Activated CD4-positive, alpha-beta T cell treated with anti-CD3 and anti-CD28 coated beads for 36 hours (primary cell): ENCODE measurements at regions of chr4 and their contacts with region 1.

Region 1: DNA sequence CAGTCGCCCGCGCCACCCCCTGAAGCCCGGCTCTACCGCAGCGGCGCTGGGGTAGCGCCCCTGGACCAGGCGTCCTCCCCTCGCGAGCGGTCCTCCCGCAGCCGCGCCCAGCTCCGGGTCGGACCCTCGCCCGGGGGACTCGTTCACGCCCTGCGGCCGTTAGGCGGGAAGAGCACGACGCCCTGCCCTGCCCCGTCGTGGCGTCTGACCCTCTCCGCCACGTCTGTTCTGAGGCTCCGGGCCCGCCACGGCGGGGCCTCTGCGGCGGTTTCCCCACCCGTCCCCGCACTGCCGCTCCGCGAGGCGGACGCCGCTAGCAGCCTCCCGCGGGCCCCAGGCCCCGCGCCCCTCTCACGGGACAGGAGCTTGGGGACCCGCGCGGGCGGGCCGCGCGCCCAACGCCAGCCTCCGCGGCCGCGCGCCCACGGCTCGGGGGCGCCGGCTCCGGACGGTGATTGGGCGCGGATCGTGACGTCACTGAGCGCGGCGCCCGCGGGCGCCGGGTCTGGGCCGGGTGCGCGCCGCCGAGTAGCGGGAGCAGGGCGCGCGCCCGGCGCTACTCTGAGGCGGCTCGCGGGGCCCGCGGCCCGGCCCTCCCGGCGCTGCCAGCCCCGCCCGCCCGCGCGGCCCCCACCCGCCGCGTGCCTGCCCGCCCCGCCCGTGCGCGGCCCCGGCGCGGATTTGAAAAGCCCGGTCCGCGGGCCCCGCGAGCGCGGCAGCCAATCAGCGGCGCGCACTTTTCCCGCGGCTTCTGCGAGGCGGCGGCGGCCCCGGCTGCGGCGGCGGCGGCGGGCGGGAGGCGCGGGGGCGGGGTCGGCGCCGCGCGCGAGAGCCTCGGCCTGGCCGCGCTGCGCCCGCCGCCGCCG is at the start of gene NSD2:
- DNase-seq: peak; percentile 96
- ATAC-seq: peak; percentile 60
- H3K4me3 Mint-ChIP-seq: peak within 1 kb of the TSS; percentile 99
- H3K27ac Mint-ChIP-seq: peak within 1 kb of the TSS; percentile 99
- H3K4me1 Mint-ChIP-seq: peaks cover 36% of the 10 kb centered on the region
- H3K27me3 Mint-ChIP-seq: no peaks in the 10 kb centered on the region
- total RNA-seq, gene NSD2: 194 to 232 TPM

Region 2: DNA sequence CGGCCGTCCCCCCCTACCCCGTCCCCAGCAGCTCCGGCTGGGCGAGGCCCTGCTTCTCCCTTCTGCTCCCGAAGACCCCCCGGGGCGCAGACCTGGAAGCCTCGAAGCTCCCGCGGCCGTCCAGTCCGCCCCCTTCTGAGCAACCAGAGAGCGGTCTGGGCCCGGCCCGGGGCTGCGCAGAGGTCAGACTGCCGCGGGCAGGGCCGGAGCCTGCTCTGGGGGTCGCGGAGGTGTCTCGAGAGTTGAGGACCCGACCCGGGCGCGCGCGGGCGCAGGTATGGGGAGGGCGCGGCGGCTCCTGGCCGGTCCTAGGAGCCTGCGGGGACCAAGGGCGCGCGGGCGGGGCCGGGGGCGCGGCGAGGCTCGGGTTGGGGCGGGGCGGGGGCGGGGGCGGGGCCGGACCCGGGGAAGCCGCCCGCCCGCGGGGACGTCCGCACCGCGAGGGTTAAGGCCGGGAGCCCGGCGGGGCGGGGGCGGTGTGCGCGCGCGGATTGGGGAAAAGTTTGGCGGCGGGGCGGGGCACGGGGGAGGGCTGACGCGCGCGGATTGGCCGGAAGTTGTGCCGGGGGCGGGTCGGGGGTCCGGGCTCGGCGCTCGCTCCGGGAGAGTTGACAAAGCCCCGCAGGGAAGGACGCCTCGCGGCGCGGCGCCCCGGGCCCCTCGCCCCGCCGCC is 859.7 kb before region 1 on chr4 and contains the start of gene FGFRL1:
- CTCF ChIA-PET with region 1: no interaction called
- POLR2A ChIA-PET with region 1: no interaction called
- intact Hi-C with region 1: loop called in 1 of 2 experiments (anchors 2 kb)
- DNase-seq: peak; percentile 97
- ATAC-seq: peak; percentile 59
- H3K4me3 Mint-ChIP-seq: peak within 1 kb of the TSS; percentile 75
- H3K27ac Mint-ChIP-seq: peak within 1 kb of the TSS; percentile 80
- H3K4me1 Mint-ChIP-seq: peaks cover 9% of the 10 kb centered on the region
- H3K27me3 Mint-ChIP-seq: peaks cover 26% of the 10 kb centered on the region
- total RNA-seq, gene FGFRL1: 17.6 to 23.5 TPM

Region 3: DNA sequence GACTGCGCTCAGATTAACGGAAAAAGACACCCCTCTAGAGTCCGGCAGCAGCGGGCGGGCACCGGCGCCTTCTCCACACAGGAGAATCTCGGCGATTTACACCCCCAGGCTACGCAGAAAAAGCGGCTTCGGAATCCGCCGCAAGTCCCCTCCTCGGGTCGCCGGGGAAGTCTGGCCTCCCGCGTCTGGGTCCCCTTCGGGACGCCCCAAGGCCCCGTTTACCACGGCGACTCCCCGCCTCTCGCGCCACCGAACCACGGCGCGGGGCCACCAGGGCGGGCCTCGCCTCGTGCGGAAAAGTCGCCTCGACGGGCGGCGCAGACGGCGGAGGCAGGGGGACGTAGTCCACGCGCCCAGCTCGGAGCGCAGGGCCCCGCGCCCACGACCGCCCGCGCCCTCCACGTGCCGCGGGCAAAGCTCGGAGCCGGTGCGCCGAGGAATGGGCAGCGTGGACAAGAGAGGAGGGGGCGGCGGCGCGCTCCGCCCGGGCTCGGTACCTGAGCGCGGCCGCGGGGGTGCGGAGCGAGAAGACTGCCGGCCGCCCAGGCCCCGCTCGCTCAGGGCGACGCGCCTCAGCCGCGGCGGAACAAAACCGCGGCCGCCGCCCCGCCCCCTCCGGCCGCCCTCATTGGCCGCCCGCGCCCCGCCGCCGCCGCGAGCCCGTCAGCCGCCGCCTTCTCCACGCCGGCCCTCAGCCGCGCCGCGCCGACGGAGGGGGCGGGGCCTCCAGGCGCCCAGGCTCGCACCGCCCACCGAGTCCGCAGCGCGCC is 186.9 kb before region 1 on chr4 and contains the start of gene FAM53A:
- CTCF ChIA-PET with region 1: no interaction called
- POLR2A ChIA-PET with region 1: no interaction called
- intact Hi-C with region 1: loop called in 1 of 2 experiments (anchors 1 kb)
- DNase-seq: no peak
- ATAC-seq: peak; percentile 96
- H3K4me3 Mint-ChIP-seq: peak within 1 kb of the TSS; percentile 69
- H3K27ac Mint-ChIP-seq: peak within 1 kb of the TSS; percentile 69
- H3K4me1 Mint-ChIP-seq: peaks cover 12% of the 10 kb centered on the region
- H3K27me3 Mint-ChIP-seq: no peaks in the 10 kb centered on the region
- total RNA-seq, gene FAM53A: 2.0 to 2.5 TPM

Region 4: GRCh38 chr4:1809754-1810511 is 60.9 kb before region 1 on chr4:
- CTCF ChIA-PET with region 1: no interaction called
- POLR2A ChIA-PET with region 1: no interaction called
- intact Hi-C with region 1: no loop called
- DNase-seq: peak; percentile 88
- ATAC-seq: peak; percentile 93
- H3K4me3 Mint-ChIP-seq: no peak overlapping the region
- H3K27ac Mint-ChIP-seq: no peak overlapping the region
- H3K4me1 Mint-ChIP-seq: no peaks in the 10 kb centered on the region
- H3K27me3 Mint-ChIP-seq: no peaks in the 10 kb centered on the region

Region 5: DNA sequence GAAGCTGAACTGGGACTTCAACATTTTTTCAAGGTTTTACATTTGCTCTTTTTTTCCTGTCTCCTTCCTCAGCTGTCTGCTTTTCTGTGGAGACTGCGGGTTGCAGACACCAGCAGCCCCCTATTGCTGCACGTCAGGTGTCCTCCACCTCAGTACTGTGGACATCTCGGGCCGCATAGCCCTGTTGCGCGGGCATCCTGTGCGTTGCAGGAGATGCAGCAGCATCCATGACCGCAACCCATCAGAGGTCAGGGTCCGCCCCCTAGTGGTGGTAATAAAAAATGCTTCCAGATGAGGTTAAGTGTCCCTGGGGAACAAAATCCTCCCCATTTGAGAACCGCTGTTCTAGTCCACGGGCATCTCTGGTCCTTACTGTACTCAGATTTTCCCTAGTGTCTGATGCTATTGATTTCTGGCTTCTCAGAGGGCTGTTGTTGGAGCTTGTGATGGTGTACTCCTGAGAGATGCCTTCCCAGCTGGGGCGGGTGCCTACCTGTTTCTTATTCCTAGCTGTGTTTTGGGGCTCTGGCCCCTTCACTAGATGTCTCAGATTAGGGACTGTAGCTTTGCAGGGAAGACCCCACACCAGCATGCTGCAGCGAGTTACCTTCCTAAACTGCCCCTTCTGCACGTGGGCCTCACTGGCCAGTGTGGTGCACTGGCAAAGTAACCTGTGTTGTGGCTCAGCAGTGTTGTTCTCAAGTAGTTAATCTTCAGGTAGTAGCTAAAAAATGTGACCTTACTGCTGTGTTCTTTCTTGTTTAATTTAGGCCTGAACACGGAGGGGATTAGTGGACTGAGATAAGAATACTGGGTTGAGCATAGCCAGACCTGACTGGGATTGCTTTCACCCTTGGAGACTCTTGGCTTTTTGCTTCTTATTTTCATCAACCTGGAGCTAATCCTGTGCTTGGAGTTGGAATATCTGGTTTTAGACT is 28.6 kb after region 1 on chr4:
- CTCF ChIA-PET with region 1: interaction called, 13 read pairs
- POLR2A ChIA-PET with region 1: interaction called, 3 read pairs
- intact Hi-C with region 1: loop called (anchors 1 kb)
- DNase-seq: peak; percentile 84
- ATAC-seq: peak; percentile 91
- H3K4me3 Mint-ChIP-seq: no peak overlapping the region
- H3K27ac Mint-ChIP-seq: peak overlapping the region; percentile 75
- H3K4me1 Mint-ChIP-seq: peaks cover 28% of the 10 kb centered on the region
- H3K27me3 Mint-ChIP-seq: no peaks in the 10 kb centered on the region

Region 6: DNA sequence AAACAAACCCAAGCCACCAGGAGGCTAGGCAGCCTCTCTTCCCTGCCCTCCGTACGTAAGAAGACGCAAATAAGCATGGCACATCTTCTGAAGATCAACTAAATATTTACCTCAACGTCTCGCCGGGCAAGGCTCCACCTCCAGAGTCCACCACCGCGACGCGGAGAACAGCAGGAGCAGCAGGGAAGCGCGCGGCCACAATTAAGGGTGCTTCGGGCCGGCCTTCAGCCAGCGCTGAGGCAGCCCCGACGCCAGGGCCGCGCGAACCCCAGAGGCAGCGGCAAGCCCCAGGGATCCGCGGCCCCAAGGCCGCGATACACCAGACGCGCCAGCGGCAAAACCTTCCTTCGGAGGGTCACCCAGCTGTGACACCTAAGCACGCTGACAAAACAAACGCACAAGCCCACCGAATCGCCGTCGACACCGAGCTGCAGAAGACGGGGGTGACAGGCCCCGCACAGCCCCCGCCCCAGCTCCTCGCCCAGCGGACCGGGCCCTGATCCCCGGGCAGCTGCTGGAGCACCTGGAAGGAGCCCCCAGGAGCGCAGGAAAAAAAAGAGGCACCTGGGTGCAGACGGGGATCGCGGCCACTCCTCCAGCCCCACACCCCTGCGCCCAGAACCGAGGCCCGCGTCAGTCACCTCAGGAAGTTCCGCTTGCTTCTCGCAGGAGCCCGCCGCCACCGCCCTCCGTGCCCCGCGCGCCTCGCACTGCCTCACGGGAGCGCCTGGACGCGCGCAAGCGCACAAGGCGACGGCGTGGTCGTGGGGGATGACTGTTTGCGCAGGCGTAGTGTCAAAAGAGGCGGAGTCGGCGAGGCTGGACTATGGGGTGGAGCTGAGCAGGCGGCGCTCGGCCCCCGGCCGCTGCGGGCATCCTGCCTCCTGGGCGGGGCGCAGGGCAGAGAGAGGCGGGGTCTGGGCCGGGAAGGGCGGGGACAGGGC is 370.9 kb after region 1 on chr4 and contains the starts of genes HAUS3 and POLN:
- CTCF ChIA-PET with region 1: no interaction called
- POLR2A ChIA-PET with region 1: no interaction called
- intact Hi-C with region 1: loop called in 1 of 2 experiments (anchors 2 kb)
- DNase-seq: peak; percentile 99
- ATAC-seq: peak; percentile 97
- H3K4me3 Mint-ChIP-seq: peak within 1 kb of the TSS; percentile 91
- H3K27ac Mint-ChIP-seq: peak within 1 kb of the TSS; percentile 88
- H3K4me1 Mint-ChIP-seq: peaks cover 54% of the 10 kb centered on the region
- H3K27me3 Mint-ChIP-seq: no peaks in the 10 kb centered on the region
- total RNA-seq, gene HAUS3: 14.6 to 18.6 TPM
- total RNA-seq, gene POLN: 2.3 to 3.2 TPM

Region 7: DNA sequence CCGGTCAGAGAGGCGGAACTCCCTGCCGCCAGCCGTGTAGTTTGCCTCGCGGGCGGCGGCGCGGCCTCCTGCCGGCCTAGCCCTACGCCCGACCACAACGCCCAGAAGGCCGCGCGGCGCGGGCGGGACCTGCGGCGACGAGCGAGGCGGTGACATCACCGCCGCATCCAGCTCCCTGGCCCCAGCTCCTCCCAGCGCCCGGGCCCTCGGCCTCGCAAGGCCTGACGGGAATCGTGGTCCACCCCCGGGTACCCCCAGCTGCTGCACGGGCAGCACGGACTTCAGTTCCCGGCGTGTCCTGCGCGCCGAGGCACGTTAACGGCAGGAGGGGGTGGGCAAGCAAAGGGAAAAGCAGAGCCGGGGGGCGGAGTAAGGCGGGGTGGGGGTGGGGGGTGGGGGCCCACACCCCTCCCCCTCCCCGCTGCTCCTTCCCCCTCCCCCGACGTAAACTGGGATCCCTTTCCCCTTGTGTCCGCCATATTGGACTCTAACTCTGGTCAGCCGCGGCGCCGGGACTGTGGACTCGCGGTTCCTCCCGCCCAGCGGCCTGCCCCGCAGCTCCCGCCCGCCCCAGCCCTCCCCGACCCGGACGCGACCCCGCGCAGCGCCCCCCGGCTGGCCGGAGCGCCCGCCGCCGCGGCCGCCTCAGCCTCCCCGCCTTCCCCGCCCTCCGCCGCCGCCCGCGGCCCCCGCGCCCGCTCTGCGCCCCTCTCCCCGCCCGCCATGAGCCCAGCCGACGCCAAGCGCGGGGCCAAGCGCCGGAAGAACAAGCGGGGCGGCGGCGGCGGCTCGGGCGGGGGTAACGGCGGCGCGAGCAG is 665.6 kb after region 1 on chr4 and contains the start of gene FAM193A:
- CTCF ChIA-PET with region 1: no interaction called
- POLR2A ChIA-PET with region 1: no interaction called
- intact Hi-C with region 1: loop called in 1 of 2 experiments (anchors 5 kb)
- DNase-seq: peak; percentile 100
- ATAC-seq: peak; percentile 97
- H3K4me3 Mint-ChIP-seq: peak within 1 kb of the TSS; percentile 87
- H3K27ac Mint-ChIP-seq: peak within 1 kb of the TSS; percentile 88
- H3K4me1 Mint-ChIP-seq: peaks cover 24% of the 10 kb centered on the region
- H3K27me3 Mint-ChIP-seq: no peaks in the 10 kb centered on the region
- total RNA-seq, gene FAM193A: 22.1 to 30.1 TPM

Region 8: GRCh38 chr4:3292571-3293400 is 1422.0 kb after region 1 on chr4 and contains the start of gene RGS12:
- CTCF ChIA-PET with region 1: no interaction called
- POLR2A ChIA-PET with region 1: no interaction called
- intact Hi-C with region 1: loop called in 1 of 2 experiments (anchors 5 kb)
- DNase-seq: peak; percentile 93
- ATAC-seq: peak; percentile 95
- H3K4me3 Mint-ChIP-seq: peak within 1 kb of the TSS; percentile 81
- H3K27ac Mint-ChIP-seq: peak within 1 kb of the TSS; percentile 64
- H3K4me1 Mint-ChIP-seq: peaks cover 11% of the 10 kb centered on the region
- H3K27me3 Mint-ChIP-seq: peaks cover 4% of the 10 kb centered on the region
- total RNA-seq, gene RGS12: 8.0 to 9.4 TPM